HEK293 (cell line): ENCODE measurements at regions of chr11 and their contacts with region 1.

Region 1: GRCh38 chr11:10808553-10809372 is at the start of gene EIF4G2:
- H3K4me3 ChIP-seq: peak within 1 kb of the TSS; percentile 99
- H3K27ac ChIP-seq: peak within 1 kb of the TSS; percentile 90
- H3K4me1 ChIP-seq: no peaks in the 10 kb centered on the region
- CTCF ChIP-seq: peak; percentile 13; the same call in 1 of the 2 replicates

Region 2: DNA sequence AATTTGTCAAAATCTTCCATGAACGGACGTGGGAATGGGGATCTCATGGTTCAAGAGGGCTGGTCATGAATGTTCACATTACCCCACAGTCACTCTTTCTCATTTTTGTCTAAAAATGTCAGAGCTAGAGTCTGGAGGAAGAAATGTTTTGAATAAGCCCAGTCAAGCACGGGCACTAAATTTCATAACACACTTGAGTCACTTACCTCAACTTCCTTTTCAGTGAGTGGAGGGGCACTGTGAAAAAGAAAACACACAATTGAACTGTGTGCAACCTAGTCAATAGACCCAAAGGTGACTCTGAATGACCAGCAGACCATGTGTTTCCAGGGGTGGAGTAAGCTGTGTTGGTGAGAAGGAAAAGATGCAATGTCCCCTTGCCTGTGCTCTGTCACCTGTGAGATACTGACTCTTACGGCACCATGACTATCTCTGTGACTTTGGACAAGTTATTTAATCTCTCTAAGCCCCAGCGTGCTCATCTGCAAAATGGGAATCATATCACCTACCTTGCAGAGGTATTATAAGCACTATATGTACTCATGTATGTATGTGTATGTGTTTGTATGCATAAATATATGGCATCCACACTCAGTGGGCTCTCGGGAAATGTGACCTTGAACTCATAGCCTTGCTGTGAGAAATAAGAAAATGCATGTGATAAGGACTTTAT is 202.1 kb before region 1 on chr11:
- CTCF ChIA-PET with region 1: no interaction called
- POLR2A ChIA-PET with region 1: no interaction called
- H3K4me3 ChIP-seq: no peak overlapping the region
- H3K27ac ChIP-seq: no peak overlapping the region
- H3K4me1 ChIP-seq: no peaks in the 10 kb centered on the region
- CTCF ChIP-seq: no peak

Region 3: GRCh38 chr11:10792398-10792975 is 16.3 kb before region 1 on chr11:
- CTCF ChIA-PET with region 1: interaction called, 29 read pairs
- POLR2A ChIA-PET with region 1: interaction called, 95 read pairs
- H3K4me3 ChIP-seq: no peak overlapping the region
- H3K27ac ChIP-seq: no peak overlapping the region
- H3K4me1 ChIP-seq: no peaks in the 10 kb centered on the region
- CTCF ChIP-seq: peak; percentile 90

Region 4: DNA sequence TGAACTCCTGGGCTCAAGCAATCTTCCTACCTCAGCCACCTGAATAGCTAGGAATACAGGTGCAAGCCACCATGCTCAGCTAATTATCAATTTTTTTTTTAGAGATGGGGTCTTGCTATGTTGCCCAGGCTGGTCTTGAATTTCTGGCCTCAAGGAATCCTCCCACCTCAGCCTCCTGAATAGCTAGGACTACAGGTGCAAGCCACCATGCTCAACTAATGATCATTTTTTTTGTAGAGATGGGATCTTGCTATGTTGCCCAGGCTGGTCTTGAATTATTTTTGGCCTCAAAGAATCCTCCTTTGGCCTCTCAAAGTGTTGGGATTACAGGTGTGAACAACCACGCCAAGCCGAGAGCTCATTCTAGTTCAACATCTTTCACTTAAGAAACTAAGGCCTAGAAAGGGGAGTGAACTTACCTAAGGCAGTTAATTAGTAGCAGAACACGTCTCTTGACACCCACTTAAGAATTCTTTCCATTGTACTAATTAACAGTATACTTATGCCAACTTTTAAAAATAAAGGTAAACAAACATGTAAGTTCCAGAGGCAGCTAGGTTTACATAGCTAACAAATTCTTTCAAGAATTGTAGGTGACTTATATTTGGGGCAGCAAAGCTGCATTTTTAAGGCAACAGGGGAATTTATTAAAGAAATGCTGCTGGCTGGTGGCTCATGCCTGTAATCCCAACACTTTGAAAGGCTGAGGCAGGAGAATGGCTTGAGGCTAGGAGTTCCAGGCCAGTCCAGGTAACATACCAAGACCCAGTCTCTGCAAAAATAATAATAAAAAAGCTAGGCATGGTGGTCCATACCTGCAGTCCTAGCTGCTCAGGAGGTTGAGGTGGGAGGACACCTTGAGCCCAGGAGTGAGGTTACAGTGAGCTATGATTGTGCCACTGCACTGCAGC is 39.5 kb after region 1 on chr11:
- CTCF ChIA-PET with region 1: interaction called, 4 read pairs
- POLR2A ChIA-PET with region 1: interaction called, 35 read pairs
- H3K4me3 ChIP-seq: no peak overlapping the region
- H3K27ac ChIP-seq: no peak overlapping the region
- H3K4me1 ChIP-seq: no peaks in the 10 kb centered on the region
- CTCF ChIP-seq: no peak

Region 5: GRCh38 chr11:10906513-10906912 is 97.8 kb after region 1 on chr11:
- CTCF ChIA-PET with region 1: no interaction called
- POLR2A ChIA-PET with region 1: interaction called, 27 read pairs
- H3K4me3 ChIP-seq: no peak overlapping the region
- H3K27ac ChIP-seq: no peak overlapping the region
- H3K4me1 ChIP-seq: no peaks in the 10 kb centered on the region
- CTCF ChIP-seq: 0 out of 2 replicates have a peak, but pooled peaks have one; percentile 25

Region 6: GRCh38 chr11:11016068-11016467 is 207.3 kb after region 1 on chr11:
- CTCF ChIA-PET with region 1: no interaction called
- POLR2A ChIA-PET with region 1: interaction called, 13 read pairs
- H3K4me3 ChIP-seq: no peak overlapping the region
- H3K27ac ChIP-seq: no peak overlapping the region
- H3K4me1 ChIP-seq: no peaks in the 10 kb centered on the region
- CTCF ChIP-seq: no peak